ENCODE measurements at regions of chr15 and their contacts with region 1.

Region 1: GRCh38 chr15:50145451-50145872 is 26.4 kb upstream of the ATP8B4 start:
- DNase-seq: no peak
- H3K4me3 ChIP-seq: no peak overlapping the region
- H3K27ac ChIP-seq: no peak overlapping the region
- H3K4me1 ChIP-seq: no peaks in the 10 kb centered on the region
- H3K27me3 ChIP-seq: no peaks in the 10 kb centered on the region
- CTCF ChIP-seq: peak; percentile 40 to 59 (median 48)

Region 2: GRCh38 chr15:49895337-49896223 is 249.9 kb before region 1 on chr15:
- intact Hi-C with region 1: loop called (anchors 10 kb)
- DNase-seq: no peak
- H3K4me3 ChIP-seq: no peak overlapping the region
- H3K27ac ChIP-seq: no peak overlapping the region
- H3K4me1 ChIP-seq: peaks cover 0 to 5% of the 10 kb centered on the region in 2 donors
- H3K27me3 ChIP-seq: no peaks in the 10 kb centered on the region
- CTCF ChIP-seq: no peak

Measured in ascending aorta (tissue), 2 donors.